ENCODE measurements at regions of chr6 and their contacts with region 1.

Region 1: GRCh38 chr6:36703982-36704381 is 6.4 kb downstream of the RAB44 start:
- DNase-seq: no peak
- H3K4me3 ChIP-seq: no peak overlapping the region
- H3K27ac ChIP-seq: no peak overlapping the region
- H3K4me1 ChIP-seq: no peaks in the 10 kb centered on the region
- H3K27me3 ChIP-seq: no peaks in the 10 kb centered on the region
- CTCF ChIP-seq: no peak
- EP300 ChIP-seq: no peak
- POLR2A ChIP-seq: no peak

Region 2: GRCh38 chr6:36691612-36692011 is 12.4 kb before region 1 on chr6:
- in situ Hi-C with region 1: no loop called
- intact Hi-C with region 1: loop called (anchors 1 kb)
- DNase-seq: no peak
- H3K4me3 ChIP-seq: no peak overlapping the region
- H3K27ac ChIP-seq: no peak overlapping the region
- H3K4me1 ChIP-seq: peaks cover 0 to 12% (median 7%) of the 10 kb centered on the region in 4 donors
- H3K27me3 ChIP-seq: no peaks in the 10 kb centered on the region
- CTCF ChIP-seq: no peak
- EP300 ChIP-seq: no peak
- POLR2A ChIP-seq: no peak